Testis (tissue), 5 donors: ENCODE measurements at regions of chr17 and their contacts with region 1.

Region 1: GRCh38 chr17:61251939-61252896 is 147.4 kb upstream of the TBX2 start:
- DNase-seq: peak; percentile 88
- H3K4me3 ChIP-seq: no peak overlapping the region
- H3K27ac ChIP-seq: peak overlapping the region; percentile 26 to 63
- H3K4me1 ChIP-seq: peaks cover 46% of the 10 kb centered on the region
- H3K27me3 ChIP-seq: no peaks in the 10 kb centered on the region
- CTCF ChIP-seq: no peak
- POLR2A ChIP-seq: no peak

Region 2: GRCh38 chr17:61097781-61098180 is 154.4 kb before region 1 on chr17:
- intact Hi-C with region 1: no loop called
- DNase-seq: no peak
- H3K4me3 ChIP-seq: no peak overlapping the region
- H3K27ac ChIP-seq: no peak overlapping the region
- H3K4me1 ChIP-seq: no peaks in the 10 kb centered on the region
- H3K27me3 ChIP-seq: no peaks in the 10 kb centered on the region
- CTCF ChIP-seq: no peak
- POLR2A ChIP-seq: no peak

Region 3: DNA sequence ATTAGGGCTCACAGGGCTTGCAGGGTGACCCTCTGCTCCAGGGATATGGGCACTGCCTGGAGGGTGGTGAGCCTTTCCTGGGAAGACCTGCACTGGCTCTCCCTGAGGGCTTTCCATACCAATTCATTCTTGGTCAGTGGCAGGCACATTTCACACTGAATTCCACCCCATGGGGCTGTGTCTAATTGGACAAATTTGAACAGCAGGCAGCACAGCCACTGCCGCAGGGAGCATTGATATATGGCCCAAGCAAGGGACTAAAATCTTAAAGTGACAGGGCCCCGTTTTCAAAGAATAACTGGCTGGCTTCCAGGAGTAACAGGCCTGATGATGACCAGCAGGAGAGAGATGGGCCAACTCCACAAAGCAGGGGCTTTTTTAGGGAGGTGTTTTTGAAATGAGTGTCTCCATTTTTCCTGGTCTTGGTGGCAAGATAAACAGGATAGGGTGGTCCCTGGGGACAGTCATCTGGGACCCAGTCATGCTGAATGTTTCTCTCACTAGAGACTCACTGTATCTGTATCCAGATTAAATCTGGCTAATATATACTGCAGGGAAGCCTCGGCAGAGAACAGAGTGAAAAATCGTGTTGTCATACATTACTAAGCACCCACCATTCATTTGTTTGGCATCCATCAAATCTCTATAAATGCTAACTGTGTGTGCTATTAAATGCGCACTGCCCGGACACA is 73.3 kb after region 1 on chr17:
- intact Hi-C with region 1: no loop called
- DNase-seq: no peak
- H3K4me3 ChIP-seq: no peak overlapping the region
- H3K27ac ChIP-seq: peak overlapping the region in 1 of 2 donors; percentile 71
- H3K4me1 ChIP-seq: peaks cover 20% of the 10 kb centered on the region
- H3K27me3 ChIP-seq: no peaks in the 10 kb centered on the region
- CTCF ChIP-seq: no peak
- POLR2A ChIP-seq: no peak

Region 4: GRCh38 chr17:61409301-61410112 is 157.3 kb after region 1 on chr17:
- intact Hi-C with region 1: loop called (anchors 10 kb)
- DNase-seq: peak; percentile 75
- H3K4me3 ChIP-seq: peak overlapping the region; percentile 55 to 59
- H3K27ac ChIP-seq: peak overlapping the region; percentile 68 to 95
- H3K4me1 ChIP-seq: peaks cover 19% of the 10 kb centered on the region
- H3K27me3 ChIP-seq: no peaks in the 10 kb centered on the region
- CTCF ChIP-seq: peak; percentile 20 to 72 (median 38)
- POLR2A ChIP-seq: no peak